OCI-LY7 (cell line): ENCODE measurements at regions of chr2 and their contacts with region 1.

Region 1: GRCh38 chr2:165874445-165875039 is 79.0 kb downstream of the TTC21B start:
- DNase-seq: peak; percentile 81
- H3K4me3 ChIP-seq: no peak overlapping the region
- H3K27ac ChIP-seq: no peak overlapping the region
- H3K4me1 ChIP-seq: peaks cover 6% of the 10 kb centered on the region
- CTCF ChIP-seq: peak; percentile 88

Region 2: DNA sequence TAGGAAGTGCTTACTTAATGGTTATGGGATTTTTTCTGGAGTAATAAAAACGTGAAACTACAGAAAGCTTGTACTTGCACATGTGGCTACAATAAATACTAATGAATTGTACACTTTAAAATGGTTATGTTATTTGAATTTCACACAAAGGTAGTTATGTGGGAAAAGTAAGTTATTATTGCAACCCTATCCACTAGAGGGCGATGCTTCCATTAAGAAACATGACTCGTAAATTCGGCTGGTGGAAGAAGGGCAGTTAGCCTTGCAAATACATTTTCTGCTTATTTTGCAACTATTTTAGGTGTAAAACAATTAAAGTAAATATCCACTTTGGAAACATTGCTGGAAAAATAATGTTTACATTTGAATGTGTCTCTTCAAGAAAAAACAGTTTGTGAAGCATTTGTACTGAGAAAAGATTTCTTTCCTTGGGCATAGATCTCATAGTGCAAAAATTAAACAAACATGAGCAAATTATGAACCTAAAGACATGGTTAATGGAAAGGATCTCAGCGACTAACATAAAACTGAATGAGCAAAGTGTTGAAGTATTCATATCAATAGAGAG is 473.2 kb before region 1 on chr2:
- CTCF ChIA-PET with region 1: interaction called, 7 read pairs
- POLR2A ChIA-PET with region 1: interaction called, 5 read pairs
- intact Hi-C with region 1: loop called (anchors 1 kb)
- DNase-seq: peak; percentile 75
- H3K4me3 ChIP-seq: no peak overlapping the region
- H3K27ac ChIP-seq: no peak overlapping the region
- H3K4me1 ChIP-seq: no peaks in the 10 kb centered on the region
- CTCF ChIP-seq: peak; percentile 92

Region 3: DNA sequence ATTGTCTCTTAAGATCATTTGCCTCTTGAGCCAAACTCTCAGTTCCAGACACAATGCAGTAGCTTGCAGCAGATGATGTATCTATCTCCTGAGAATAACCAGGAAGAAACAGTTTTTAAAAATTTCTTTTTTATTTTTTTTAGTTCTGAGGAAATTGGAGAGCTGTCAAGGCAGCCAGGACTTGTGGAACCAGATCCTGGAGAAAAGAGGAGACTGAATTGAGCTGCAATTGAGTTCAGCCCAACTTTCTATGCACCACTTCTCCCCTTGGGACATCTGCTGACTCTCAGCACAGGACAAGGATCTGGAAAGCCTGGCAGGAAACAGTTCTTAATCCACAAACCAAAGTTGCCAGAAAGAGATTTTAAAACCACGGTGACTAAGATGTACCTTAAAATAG is 418.5 kb before region 1 on chr2:
- CTCF ChIA-PET with region 1: no interaction called
- POLR2A ChIA-PET with region 1: no interaction called
- intact Hi-C with region 1: no loop called
- DNase-seq: no peak
- H3K4me3 ChIP-seq: no peak overlapping the region
- H3K27ac ChIP-seq: no peak overlapping the region
- H3K4me1 ChIP-seq: no peaks in the 10 kb centered on the region
- CTCF ChIP-seq: no peak

Region 4: DNA sequence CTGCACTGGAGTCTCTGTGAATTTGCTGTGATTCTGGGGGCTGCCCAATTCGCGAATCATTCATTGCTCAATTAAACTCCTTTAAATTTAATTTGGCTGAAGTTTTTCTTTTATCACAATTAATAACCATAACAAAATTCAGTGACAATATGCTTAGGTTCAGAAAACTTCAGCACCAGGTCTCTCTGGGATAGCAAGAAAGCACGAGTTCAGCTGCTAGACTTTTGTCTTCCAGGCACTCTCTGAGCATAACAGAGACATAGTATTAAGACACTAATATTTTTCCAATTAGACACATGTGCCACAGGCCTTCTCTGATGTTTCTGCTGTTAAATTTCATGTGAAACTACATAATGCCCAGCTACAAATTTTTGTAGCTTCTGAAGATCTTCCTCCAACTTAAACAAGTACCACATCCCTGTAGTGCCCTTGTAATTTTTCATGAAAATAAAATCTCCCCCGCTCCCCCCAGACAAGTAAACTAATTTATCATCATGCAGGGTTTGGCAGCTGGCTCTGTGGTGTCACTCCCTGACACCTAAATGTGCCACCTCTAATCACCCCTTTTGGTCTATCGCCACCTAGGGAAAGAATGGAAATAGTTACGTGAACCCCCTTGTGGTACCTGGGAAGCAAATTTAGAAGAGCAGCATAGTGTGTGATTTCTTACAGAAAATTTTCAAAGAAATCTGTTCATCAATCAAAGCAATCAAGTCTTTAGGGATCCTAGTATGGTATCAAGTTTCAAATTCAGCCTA is 310.9 kb before region 1 on chr2:
- CTCF ChIA-PET with region 1: no interaction called
- POLR2A ChIA-PET with region 1: no interaction called
- intact Hi-C with region 1: loop called (anchors 5 kb)
- DNase-seq: peak; percentile 34
- H3K4me3 ChIP-seq: no peak overlapping the region
- H3K27ac ChIP-seq: no peak overlapping the region
- H3K4me1 ChIP-seq: peaks cover 7% of the 10 kb centered on the region
- CTCF ChIP-seq: peak; percentile 71

Region 5: GRCh38 chr2:165953655-165954606 is 79.4 kb after region 1 on chr2 and contains the start of gene TTC21B:
- CTCF ChIA-PET with region 1: no interaction called
- POLR2A ChIA-PET with region 1: no interaction called
- intact Hi-C with region 1: loop called (anchors 5 kb)
- DNase-seq: peak; percentile 95
- H3K4me3 ChIP-seq: peak within 1 kb of the TSS; percentile 81
- H3K27ac ChIP-seq: peak within 1 kb of the TSS; percentile 55
- H3K4me1 ChIP-seq: peaks cover 23% of the 10 kb centered on the region
- CTCF ChIP-seq: peak; percentile 87
- total RNA-seq, gene TTC21B: 29.8 and 32.6 TPM in 2 replicates

Region 6: GRCh38 chr2:166671235-166671634 is 796.7 kb after region 1 on chr2:
- CTCF ChIA-PET with region 1: no interaction called
- POLR2A ChIA-PET with region 1: no interaction called
- intact Hi-C with region 1: no loop called
- DNase-seq: no peak
- H3K4me3 ChIP-seq: no peak overlapping the region
- H3K27ac ChIP-seq: no peak overlapping the region
- H3K4me1 ChIP-seq: no peaks in the 10 kb centered on the region
- CTCF ChIP-seq: no peak